ENCODE measurements at regions of chr3 and their contacts with region 1.

Region 1: GRCh38 chr3:63818281-63819150 is 583 bp upstream of the C3orf49 start:
- DNase-seq: peak in 1 of 2 donors; percentile 30
- ATAC-seq: peak; percentile 56 to 82 (median 63)
- H3K4me3 ChIP-seq: no peak overlapping the region
- H3K27ac ChIP-seq: no peak overlapping the region
- H3K4me1 ChIP-seq: no peaks in the 10 kb centered on the region
- H3K27me3 ChIP-seq: no peaks in the 10 kb centered on the region
- CTCF ChIP-seq: peak; percentile 87

Region 2: GRCh38 chr3:62615258-62615849 is 1203.2 kb before region 1 on chr3:
- intact Hi-C with region 1: loop called (anchors 5 to 10 kb)
- DNase-seq: no peak
- ATAC-seq: no peak
- H3K4me3 ChIP-seq: no peak overlapping the region
- H3K27ac ChIP-seq: no peak overlapping the region
- H3K4me1 ChIP-seq: no peaks in the 10 kb centered on the region
- H3K27me3 ChIP-seq: no peaks in the 10 kb centered on the region
- CTCF ChIP-seq: no peak

Region 3: GRCh38 chr3:62622553-62623193 is 1195.8 kb before region 1 on chr3:
- intact Hi-C with region 1: loop called (anchors 5 to 10 kb)
- DNase-seq: no peak
- ATAC-seq: peak in 1 of 4 donors; percentile 59
- H3K4me3 ChIP-seq: no peak overlapping the region
- H3K27ac ChIP-seq: no peak overlapping the region
- H3K4me1 ChIP-seq: no peaks in the 10 kb centered on the region
- H3K27me3 ChIP-seq: no peaks in the 10 kb centered on the region
- CTCF ChIP-seq: peak; percentile 57

Region 4: DNA sequence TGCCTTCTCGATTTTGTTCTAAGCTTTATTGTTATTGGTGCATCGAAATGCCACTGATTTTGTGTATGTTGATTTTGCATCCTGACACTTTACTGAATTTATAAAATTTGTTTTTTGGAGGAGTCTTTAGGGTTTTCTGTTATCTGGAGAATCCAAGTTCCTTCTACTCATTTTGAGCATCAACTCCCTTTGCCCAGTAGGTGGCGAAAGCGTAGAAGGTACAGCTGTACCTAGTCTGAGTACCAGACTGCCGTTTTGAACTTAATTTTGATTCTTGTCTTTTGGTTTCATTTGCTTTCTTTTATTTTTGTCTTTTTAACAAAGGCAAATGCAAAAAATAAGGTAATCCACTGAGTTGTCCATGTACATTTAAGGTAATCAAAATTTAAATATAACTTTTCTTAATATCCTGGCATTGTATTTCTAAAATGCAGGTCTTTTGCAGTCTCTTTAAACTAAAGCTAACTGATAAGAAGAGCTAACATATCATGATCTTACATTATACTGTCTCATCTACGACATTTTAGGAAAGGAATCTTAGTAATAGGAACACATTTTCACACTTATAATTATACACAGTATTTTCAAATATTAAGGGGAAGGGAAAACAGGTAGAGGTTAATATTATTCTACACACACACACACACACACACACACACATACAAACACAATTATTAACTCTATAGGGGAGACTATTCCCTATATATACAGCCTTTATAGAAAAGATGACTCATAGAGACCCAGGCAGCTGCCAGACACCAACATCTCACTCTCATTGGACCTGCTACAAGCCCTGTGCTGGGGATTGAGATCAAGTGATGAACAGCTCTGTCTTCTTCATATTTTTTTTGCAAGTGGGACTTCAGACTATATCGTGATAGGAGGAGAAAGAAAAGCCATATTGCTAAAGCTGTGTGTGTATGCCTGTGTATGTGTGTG is 468.7 kb before region 1 on chr3:
- intact Hi-C with region 1: loop called (anchors 1 to 2 kb)
- DNase-seq: peak in 1 of 2 donors; percentile 42
- ATAC-seq: peak in 1 of 4 donors; percentile 62
- H3K4me3 ChIP-seq: no peak overlapping the region
- H3K27ac ChIP-seq: no peak overlapping the region
- H3K4me1 ChIP-seq: no peaks in the 10 kb centered on the region
- H3K27me3 ChIP-seq: peaks cover 0 to 7% (median 2%) of the 10 kb centered on the region in 3 donors
- CTCF ChIP-seq: peak; percentile 64

Region 5: GRCh38 chr3:63724987-63725386 is 93.5 kb before region 1 on chr3:
- intact Hi-C with region 1: no loop called
- DNase-seq: no peak
- ATAC-seq: no peak
- H3K4me3 ChIP-seq: no peak overlapping the region
- H3K27ac ChIP-seq: no peak overlapping the region
- H3K4me1 ChIP-seq: no peaks in the 10 kb centered on the region
- H3K27me3 ChIP-seq: no peaks in the 10 kb centered on the region
- CTCF ChIP-seq: no peak

Measured in psoas muscle (tissue), 8 donors.